GM12878 (cell line): ENCODE measurements at regions of chr3 and their contacts with region 1.

Region 1: GRCh38 chr3:171772427-171773056 is 37.7 kb downstream of the PLD1 start:
- DNase-seq: no peak
- ATAC-seq: peak; percentile 62
- H3K4me3 ChIP-seq: no peak overlapping the region
- H3K27ac ChIP-seq: no peak overlapping the region
- H3K4me1 ChIP-seq: no peaks in the 10 kb centered on the region
- H3K27me3 ChIP-seq: no peaks in the 10 kb centered on the region
- CTCF ChIP-seq: peak; percentile 63 to 79 (median 70)
- EP300 ChIP-seq: no peak
- POLR2A ChIP-seq: no peak
- RAD21 ChIP-seq: peak; percentile 80

Region 2: DNA sequence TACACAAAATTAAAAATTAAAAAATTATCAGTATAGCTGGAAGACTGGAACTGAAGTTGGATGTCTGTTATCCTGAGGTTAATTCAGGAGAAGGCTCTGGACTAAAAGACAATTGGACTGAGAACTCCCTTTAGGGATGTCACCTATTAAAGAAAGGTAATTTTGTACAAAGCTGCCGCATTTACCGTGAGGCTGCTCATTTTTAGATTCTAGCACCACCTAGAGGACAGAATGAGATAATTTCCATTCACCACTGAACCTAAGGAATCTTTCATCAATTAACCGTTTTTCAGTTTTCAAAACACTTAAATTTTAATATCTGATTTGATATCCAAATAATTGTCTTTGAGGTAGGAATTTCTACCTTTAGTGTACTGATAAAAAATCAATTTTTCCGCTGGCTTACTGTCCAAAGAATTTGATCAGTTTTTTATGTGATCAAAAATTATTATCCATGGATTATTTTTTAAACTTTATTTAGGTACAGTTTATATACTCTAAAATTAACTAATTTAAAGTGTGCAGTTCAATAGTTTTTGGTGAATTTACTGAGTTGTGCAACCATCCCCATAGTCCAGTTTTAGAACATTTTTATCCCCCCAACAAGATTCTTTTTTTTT is 205.6 kb before region 1 on chr3:
- CTCF ChIA-PET with region 1: interaction called, 14 read pairs
- POLR2A ChIA-PET with region 1: no interaction called
- RAD21 ChIA-PET with region 1: interaction called, 13 read pairs
- SMC1A ChIA-PET with region 1: interaction called, 20 read pairs
- in situ Hi-C with region 1: no loop called
- intact Hi-C with region 1: no loop called
- DNase-seq: peak; percentile 42
- ATAC-seq: peak; percentile 81
- H3K4me3 ChIP-seq: no peak overlapping the region
- H3K27ac ChIP-seq: no peak overlapping the region
- H3K4me1 ChIP-seq: peaks cover 3% of the 10 kb centered on the region; the same call in 1 of the 2 replicates
- H3K27me3 ChIP-seq: no peaks in the 10 kb centered on the region
- CTCF ChIP-seq: peak; percentile 46 to 86 (median 63); a peak in 5 of 6 replicates
- EP300 ChIP-seq: no peak
- POLR2A ChIP-seq: no peak
- RAD21 ChIP-seq: peak; percentile 95

Region 3: DNA sequence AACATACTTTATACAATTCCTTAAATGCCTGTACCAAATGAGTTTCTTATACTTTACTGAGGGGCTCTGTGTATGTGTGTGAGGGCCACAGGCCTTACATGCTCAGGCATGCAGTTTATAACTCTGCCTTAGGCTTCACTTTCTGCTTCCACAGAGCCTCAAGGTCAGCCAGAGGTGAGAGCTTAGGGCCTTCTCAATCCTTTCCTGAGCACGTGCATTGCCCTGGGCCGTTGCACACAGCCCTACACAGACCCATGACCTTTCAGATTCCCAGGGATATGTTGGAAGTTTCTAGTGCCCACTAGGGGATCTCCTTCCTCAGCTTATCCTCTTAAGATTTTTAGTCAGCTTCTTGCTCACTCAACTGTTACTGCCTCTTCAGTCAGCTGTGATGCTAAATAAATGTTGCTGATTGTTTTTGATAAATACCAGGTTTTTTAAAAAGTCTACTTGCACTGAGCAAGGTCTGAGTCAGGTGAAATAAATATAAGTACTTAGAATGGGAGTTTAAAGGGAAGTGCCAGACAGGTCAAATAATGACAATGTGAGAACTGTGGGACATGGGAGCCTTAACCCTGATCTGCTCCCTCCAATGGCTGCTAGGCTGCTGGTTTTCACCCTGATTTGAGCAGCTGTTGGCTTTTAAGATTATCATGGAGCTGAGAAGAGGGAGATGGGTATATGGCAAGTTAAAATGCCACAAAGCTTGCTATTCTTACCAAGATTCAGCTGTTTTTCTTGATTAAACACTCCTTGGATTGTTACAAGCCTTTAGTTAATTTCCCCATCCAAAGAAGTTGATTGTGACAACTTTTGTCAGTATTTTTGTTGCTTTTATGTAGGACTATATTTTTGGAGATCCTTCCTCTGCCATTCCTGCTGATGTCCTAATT is 131.8 kb before region 1 on chr3:
- CTCF ChIA-PET with region 1: interaction called, 63 read pairs
- POLR2A ChIA-PET with region 1: no interaction called
- RAD21 ChIA-PET with region 1: interaction called, 34 read pairs
- SMC1A ChIA-PET with region 1: interaction called, 54 read pairs
- in situ Hi-C with region 1: loop called (anchors 5 kb)
- intact Hi-C with region 1: no loop called
- DNase-seq: no peak
- ATAC-seq: peak; percentile 79
- H3K4me3 ChIP-seq: no peak overlapping the region
- H3K27ac ChIP-seq: no peak overlapping the region
- H3K4me1 ChIP-seq: no peaks in the 10 kb centered on the region
- H3K27me3 ChIP-seq: no peaks in the 10 kb centered on the region
- CTCF ChIP-seq: no peak
- EP300 ChIP-seq: no peak
- POLR2A ChIP-seq: no peak
- RAD21 ChIP-seq: no peak

Region 4: DNA sequence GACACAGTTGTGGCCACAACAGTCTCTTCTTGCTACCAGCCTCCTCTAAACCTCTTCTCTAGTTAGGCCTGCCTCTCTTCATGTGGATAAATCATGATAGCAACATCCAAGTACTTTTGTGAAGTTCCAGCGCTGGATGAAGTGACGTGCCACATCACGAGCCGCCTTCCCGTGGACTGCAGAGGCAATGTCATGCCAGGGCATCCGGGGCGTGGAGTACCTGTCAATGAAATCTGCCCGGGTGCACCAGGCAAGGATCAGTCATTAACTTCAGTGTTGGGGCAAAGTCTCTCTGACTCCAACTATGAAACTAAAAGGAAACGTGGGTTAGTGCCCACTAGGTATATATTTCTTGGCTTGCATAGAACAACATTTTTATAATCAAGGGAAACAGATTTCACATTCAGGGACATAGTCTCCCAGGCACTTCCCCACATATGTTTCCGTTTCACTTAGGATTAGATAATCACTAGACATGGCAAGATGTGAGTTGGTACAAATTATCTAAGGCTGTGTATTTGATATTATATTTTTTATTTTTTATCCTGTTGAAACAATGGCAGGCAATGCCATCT is 95.9 kb before region 1 on chr3:
- CTCF ChIA-PET with region 1: interaction called, 26 read pairs
- POLR2A ChIA-PET with region 1: no interaction called
- RAD21 ChIA-PET with region 1: interaction called, 9 read pairs
- SMC1A ChIA-PET with region 1: interaction called, 22 read pairs
- in situ Hi-C with region 1: no loop called
- intact Hi-C with region 1: no loop called
- DNase-seq: no peak
- ATAC-seq: no peak
- H3K4me3 ChIP-seq: no peak overlapping the region
- H3K27ac ChIP-seq: no peak overlapping the region
- H3K4me1 ChIP-seq: no peaks in the 10 kb centered on the region
- H3K27me3 ChIP-seq: no peaks in the 10 kb centered on the region; a peak in 1 of 4 replicates
- CTCF ChIP-seq: no peak
- EP300 ChIP-seq: no peak
- POLR2A ChIP-seq: no peak
- RAD21 ChIP-seq: no peak

Region 5: GRCh38 chr3:171718493-171719175 is 53.9 kb before region 1 on chr3:
- CTCF ChIA-PET with region 1: interaction called, 13 read pairs
- POLR2A ChIA-PET with region 1: no interaction called
- RAD21 ChIA-PET with region 1: no interaction called
- SMC1A ChIA-PET with region 1: interaction called, 6 read pairs
- in situ Hi-C with region 1: no loop called
- intact Hi-C with region 1: no loop called
- DNase-seq: no peak
- ATAC-seq: no peak
- H3K4me3 ChIP-seq: no peak overlapping the region
- H3K27ac ChIP-seq: no peak overlapping the region
- H3K4me1 ChIP-seq: no peaks in the 10 kb centered on the region
- H3K27me3 ChIP-seq: no peaks in the 10 kb centered on the region
- CTCF ChIP-seq: no peak
- EP300 ChIP-seq: no peak
- POLR2A ChIP-seq: no peak
- RAD21 ChIP-seq: no peak

Region 6: DNA sequence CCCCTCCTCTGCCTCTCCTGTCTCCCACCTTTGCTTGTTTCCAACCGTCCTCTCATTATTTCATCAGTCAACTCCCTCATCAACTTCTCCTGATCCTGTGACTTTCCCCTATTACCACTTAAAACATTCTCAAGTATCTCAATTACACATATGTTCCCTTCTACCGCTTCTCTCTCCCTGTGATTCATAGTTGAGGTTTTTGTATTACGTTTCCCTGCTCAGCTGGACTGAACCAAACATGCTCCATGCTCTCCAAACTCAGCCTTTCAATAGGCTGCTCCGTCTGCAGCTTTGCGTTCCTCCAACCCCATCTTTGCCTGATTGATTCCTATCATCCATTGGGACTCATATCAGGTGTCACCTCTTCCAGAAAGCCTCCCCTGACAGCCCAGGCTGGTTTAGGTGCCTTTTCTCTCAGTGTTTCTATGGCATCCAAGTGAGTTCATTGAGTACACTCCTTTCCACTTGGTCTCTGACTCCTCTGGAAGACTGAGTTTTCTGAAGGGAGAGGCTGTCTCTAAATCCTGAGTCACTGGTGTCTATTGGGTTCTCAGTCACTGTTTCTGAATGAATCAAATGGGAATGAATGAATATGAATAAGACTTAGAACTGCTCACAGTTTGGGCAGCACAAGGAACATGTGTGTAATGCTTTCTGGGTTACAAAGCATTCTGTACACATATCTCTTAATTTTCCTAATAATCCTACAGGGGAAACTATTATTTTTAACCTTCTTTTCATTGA is 18.7 kb before region 1 on chr3:
- CTCF ChIA-PET with region 1: interaction called, 210 read pairs
- POLR2A ChIA-PET with region 1: interaction called, 18 read pairs
- RAD21 ChIA-PET with region 1: interaction called, 119 read pairs
- SMC1A ChIA-PET with region 1: interaction called, 192 read pairs
- in situ Hi-C with region 1: no loop called
- intact Hi-C with region 1: no loop called
- DNase-seq: no peak
- ATAC-seq: peak; percentile 13; the same call in 2 of the 3 replicates
- H3K4me3 ChIP-seq: no peak overlapping the region
- H3K27ac ChIP-seq: no peak overlapping the region; the same call in 1 of the 2 replicates
- H3K4me1 ChIP-seq: no peaks in the 10 kb centered on the region; the same call in 1 of the 2 replicates
- H3K27me3 ChIP-seq: peaks cover 0 to 3% of the 10 kb centered on the region in 2 experiments; a peak in 1 of 4 replicates
- CTCF ChIP-seq: no peak
- EP300 ChIP-seq: no peak
- POLR2A ChIP-seq: no peak
- RAD21 ChIP-seq: no peak

Region 7: DNA sequence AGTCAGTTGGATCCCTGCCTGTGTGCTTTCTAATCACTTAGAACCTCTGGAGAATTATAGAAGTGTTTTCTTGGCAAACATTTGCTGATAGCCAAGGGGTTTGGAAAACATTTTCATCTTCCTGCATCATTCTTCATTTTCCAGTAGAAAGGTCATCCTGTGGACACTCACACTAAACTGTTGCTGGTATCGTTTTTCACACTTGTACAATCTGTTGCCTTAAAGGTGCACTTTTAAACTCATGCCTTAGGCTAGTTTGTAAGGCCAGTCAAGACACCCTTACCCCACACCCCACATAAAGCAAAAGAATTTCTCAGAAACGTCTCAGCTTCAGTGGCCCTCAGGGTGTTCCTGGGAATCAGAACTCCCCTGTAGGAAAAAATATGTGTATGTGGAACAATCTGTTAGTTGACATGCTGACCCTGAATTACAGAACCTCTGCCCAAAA is 43.5 kb after region 1 on chr3:
- CTCF ChIA-PET with region 1: interaction called, 17 read pairs
- POLR2A ChIA-PET with region 1: interaction called, 3 read pairs
- RAD21 ChIA-PET with region 1: interaction called, 26 read pairs
- SMC1A ChIA-PET with region 1: interaction called, 44 read pairs
- in situ Hi-C with region 1: no loop called
- intact Hi-C with region 1: no loop called
- DNase-seq: no peak
- ATAC-seq: no peak
- H3K4me3 ChIP-seq: no peak overlapping the region
- H3K27ac ChIP-seq: no peak overlapping the region
- H3K4me1 ChIP-seq: no peaks in the 10 kb centered on the region
- H3K27me3 ChIP-seq: no peaks in the 10 kb centered on the region; a peak in 1 of 4 replicates
- CTCF ChIP-seq: no peak
- EP300 ChIP-seq: no peak
- POLR2A ChIP-seq: no peak
- RAD21 ChIP-seq: no peak